ENCODE measurements at regions of chr10 and their contacts with region 1.

Region 1: GRCh38 chr10:127966875-127967274 is 60.0 kb downstream of the PTPRE start:
- DNase-seq: no peak
- ATAC-seq: no peak
- H3K4me3 ChIP-seq: no peak overlapping the region
- H3K4me3 Mint-ChIP-seq: no peak overlapping the region
- H3K27ac ChIP-seq: no peak overlapping the region
- H3K27ac Mint-ChIP-seq: no peak overlapping the region
- H3K4me1 ChIP-seq: no peaks in the 10 kb centered on the region
- H3K4me1 Mint-ChIP-seq: no peaks in the 10 kb centered on the region
- H3K27me3 ChIP-seq: no peaks in the 10 kb centered on the region
- H3K27me3 Mint-ChIP-seq: no peaks in the 10 kb centered on the region
- CTCF ChIP-seq: no peak

Region 2: DNA sequence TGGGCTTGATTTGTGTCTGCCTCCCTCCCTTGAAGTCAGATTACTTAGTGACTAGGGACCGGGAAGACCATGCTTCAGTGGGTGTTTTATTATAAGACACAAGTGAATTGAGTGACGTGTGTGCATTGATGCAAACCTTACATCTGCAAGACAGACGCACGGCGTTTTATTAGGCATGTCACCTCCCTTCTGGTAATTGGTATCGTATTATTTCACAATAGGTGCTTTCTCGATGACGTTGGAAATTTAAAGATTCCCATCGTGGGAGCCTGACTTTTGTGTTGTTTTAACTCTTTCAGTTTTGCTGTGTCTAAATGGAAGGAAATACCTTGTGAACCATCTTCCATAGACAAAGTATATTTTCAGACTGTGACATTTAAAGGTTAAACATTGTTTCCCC is 903.1 kb before region 1 on chr10:
- CTCF ChIA-PET with region 1: no interaction called
- POLR2A ChIA-PET with region 1: no interaction called
- intact Hi-C with region 1: no loop called
- DNase-seq: no peak
- ATAC-seq: no peak
- H3K4me3 ChIP-seq: no peak overlapping the region
- H3K4me3 Mint-ChIP-seq: no peak overlapping the region
- H3K27ac ChIP-seq: no peak overlapping the region
- H3K27ac Mint-ChIP-seq: no peak overlapping the region
- H3K4me1 ChIP-seq: no peaks in the 10 kb centered on the region
- H3K4me1 Mint-ChIP-seq: no peaks in the 10 kb centered on the region
- H3K27me3 ChIP-seq: no peaks in the 10 kb centered on the region
- H3K27me3 Mint-ChIP-seq: no peaks in the 10 kb centered on the region
- CTCF ChIP-seq: no peak

Region 3: GRCh38 chr10:127990846-127991542 is 24.1 kb after region 1 on chr10:
- CTCF ChIA-PET with region 1: no interaction called
- POLR2A ChIA-PET with region 1: no interaction called
- intact Hi-C with region 1: loop called in 1 of 2 experiments (anchors 1 kb)
- DNase-seq: peak in 6 of 9 experiments; percentile 7 to 58 (median 28)
- ATAC-seq: peak; percentile 67
- H3K4me3 ChIP-seq: peak overlapping the region; percentile 11 to 22
- H3K4me3 Mint-ChIP-seq: peak overlapping the region; percentile 16
- H3K27ac ChIP-seq: peak overlapping the region in 1 of 2 experiments; percentile 37
- H3K27ac Mint-ChIP-seq: no peak overlapping the region
- H3K4me1 ChIP-seq: peaks cover 11% of the 10 kb centered on the region
- H3K4me1 Mint-ChIP-seq: peaks cover 14% of the 10 kb centered on the region
- H3K27me3 ChIP-seq: no peaks in the 10 kb centered on the region
- H3K27me3 Mint-ChIP-seq: peaks cover 3% of the 10 kb centered on the region
- CTCF ChIP-seq: no peak

Measured in CD8-positive, alpha-beta T cell (primary cell).